K562 (cell line): ENCODE measurements at regions of chr3 and their contacts with region 1.

Region 1: GRCh38 chr3:87298111-87298718 is 21.8 kb upstream of the POU1F1 start:
- DNase-seq: peak; percentile 16 to 29 (median 20)
- ATAC-seq: peak; percentile 77
- H3K4me3 ChIP-seq: no peak overlapping the region
- H3K27ac ChIP-seq: no peak overlapping the region
- H3K4me1 ChIP-seq: no peaks in the 10 kb centered on the region
- H3K27me3 ChIP-seq: no peaks in the 10 kb centered on the region
- CTCF ChIP-seq: peak; percentile 33 to 64 (median 34); a peak in 4 of 6 replicates
- EP300 ChIP-seq: no peak
- POLR2A ChIP-seq: no peak
- RAD21 ChIP-seq: peak; percentile 68 to 70

Region 2: GRCh38 chr3:86618706-86619105 is 679.5 kb before region 1 on chr3:
- CTCF ChIA-PET with region 1: no interaction called
- POLR2A ChIA-PET with region 1: no interaction called
- in situ Hi-C with region 1: no loop called
- intact Hi-C with region 1: no loop called
- DNase-seq: no peak
- ATAC-seq: no peak
- H3K4me3 ChIP-seq: no peak overlapping the region
- H3K27ac ChIP-seq: no peak overlapping the region
- H3K4me1 ChIP-seq: no peaks in the 10 kb centered on the region
- H3K27me3 ChIP-seq: no peaks in the 10 kb centered on the region
- CTCF ChIP-seq: no peak
- EP300 ChIP-seq: no peak
- POLR2A ChIP-seq: no peak
- RAD21 ChIP-seq: no peak

Region 3: GRCh38 chr3:87350364-87351199 is 52.4 kb after region 1 on chr3:
- CTCF ChIA-PET with region 1: no interaction called
- POLR2A ChIA-PET with region 1: no interaction called
- in situ Hi-C with region 1: no loop called
- intact Hi-C with region 1: loop called (anchors 10 kb)
- DNase-seq: peak; percentile 40 to 48 (median 43)
- ATAC-seq: peak; percentile 92
- H3K4me3 ChIP-seq: no peak overlapping the region
- H3K27ac ChIP-seq: no peak overlapping the region
- H3K4me1 ChIP-seq: no peaks in the 10 kb centered on the region; a peak in 1 of 5 replicates
- H3K27me3 ChIP-seq: no peaks in the 10 kb centered on the region
- CTCF ChIP-seq: peak; percentile 53 to 73 (median 55)
- EP300 ChIP-seq: no peak
- POLR2A ChIP-seq: no peak
- RAD21 ChIP-seq: peak; percentile 66 to 74

Region 4: GRCh38 chr3:87410110-87410509 is 111.9 kb after region 1 on chr3:
- CTCF ChIA-PET with region 1: no interaction called
- POLR2A ChIA-PET with region 1: no interaction called
- in situ Hi-C with region 1: no loop called
- intact Hi-C with region 1: no loop called
- DNase-seq: no peak
- ATAC-seq: no peak
- H3K4me3 ChIP-seq: no peak overlapping the region
- H3K27ac ChIP-seq: no peak overlapping the region
- H3K4me1 ChIP-seq: no peaks in the 10 kb centered on the region
- H3K27me3 ChIP-seq: no peaks in the 10 kb centered on the region
- CTCF ChIP-seq: no peak
- EP300 ChIP-seq: no peak
- POLR2A ChIP-seq: no peak
- RAD21 ChIP-seq: no peak

Region 5: DNA sequence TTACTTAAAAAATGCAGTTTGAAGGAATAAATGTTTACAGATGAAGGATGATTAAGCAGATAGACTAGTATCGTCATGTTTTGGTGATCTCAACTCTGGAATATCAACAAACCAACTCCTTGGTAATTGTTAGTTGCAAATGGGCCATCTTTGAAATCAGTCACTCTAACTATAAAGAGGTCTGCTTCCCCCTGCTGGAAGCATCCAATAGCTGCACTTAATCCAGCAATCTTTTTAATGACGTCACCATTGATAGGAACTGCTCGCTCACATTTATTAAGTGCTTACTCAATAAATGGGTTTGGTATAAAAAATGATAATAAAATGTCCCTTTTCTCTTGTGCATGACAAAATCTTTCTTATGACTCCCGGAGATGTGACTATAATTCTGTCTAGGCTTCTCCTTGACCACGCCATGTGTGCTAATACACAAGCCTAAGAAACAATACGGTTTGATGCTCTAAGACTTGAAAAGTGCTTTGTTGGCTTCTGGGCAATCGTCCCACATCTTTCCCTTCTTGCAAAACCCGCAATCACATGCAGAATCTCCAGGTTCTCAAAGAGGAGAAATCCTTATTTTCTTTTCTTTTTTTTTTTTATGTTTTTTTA is 205.8 kb after region 1 on chr3:
- CTCF ChIA-PET with region 1: interaction called, 4 read pairs
- POLR2A ChIA-PET with region 1: no interaction called
- in situ Hi-C with region 1: no loop called
- intact Hi-C with region 1: loop called (anchors 5 kb)
- DNase-seq: peak; percentile 32 to 54 (median 43)
- ATAC-seq: peak; percentile 61; the same call in 2 of the 3 replicates
- H3K4me3 ChIP-seq: no peak overlapping the region
- H3K27ac ChIP-seq: no peak overlapping the region
- H3K4me1 ChIP-seq: no peaks in the 10 kb centered on the region
- H3K27me3 ChIP-seq: no peaks in the 10 kb centered on the region
- CTCF ChIP-seq: peak; percentile 38 to 66 (median 46); a peak in 5 of 6 replicates
- EP300 ChIP-seq: no peak
- POLR2A ChIP-seq: no peak
- RAD21 ChIP-seq: peak in 1 of 2 experiments; percentile 53; a peak in 2 of 4 replicates

Region 6: DNA sequence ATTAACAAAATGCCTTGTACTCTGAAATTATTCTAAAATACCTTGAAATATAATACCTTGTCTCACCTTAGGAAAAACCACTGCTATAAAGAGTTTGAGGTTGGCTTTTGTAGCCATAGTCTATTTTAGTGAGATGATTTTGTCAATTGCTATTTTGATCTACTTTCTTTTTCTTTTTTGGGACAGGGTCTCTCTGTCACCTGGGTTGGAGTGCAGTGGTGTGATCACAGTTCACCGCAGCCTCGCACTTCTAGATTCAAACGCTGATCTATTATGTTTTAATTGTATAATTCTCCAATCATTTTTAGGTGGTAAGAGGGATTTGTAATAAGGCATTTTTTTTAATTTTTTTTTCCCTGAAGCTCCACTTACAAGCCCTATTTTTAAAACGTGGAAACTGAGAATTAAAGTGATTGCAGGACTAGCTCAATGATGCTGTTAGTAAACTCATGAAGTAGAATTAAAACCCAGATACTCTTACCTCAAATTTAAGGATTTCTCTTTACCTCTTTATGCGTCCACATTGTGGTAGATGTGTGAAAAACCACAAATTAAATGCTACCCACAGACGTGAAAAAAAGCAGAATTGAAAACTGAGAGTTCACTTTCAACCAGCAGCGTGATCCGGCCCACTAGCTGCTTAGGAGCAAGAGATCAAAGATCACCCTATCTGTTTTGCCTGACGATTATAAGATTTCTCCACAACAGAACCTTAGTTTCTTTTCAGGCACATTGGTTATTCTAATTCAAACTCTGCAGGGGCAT is 376.4 kb after region 1 on chr3:
- CTCF ChIA-PET with region 1: no interaction called
- POLR2A ChIA-PET with region 1: no interaction called
- in situ Hi-C with region 1: no loop called
- intact Hi-C with region 1: no loop called
- DNase-seq: no peak
- ATAC-seq: no peak
- H3K4me3 ChIP-seq: no peak overlapping the region
- H3K27ac ChIP-seq: no peak overlapping the region
- H3K4me1 ChIP-seq: no peaks in the 10 kb centered on the region
- H3K27me3 ChIP-seq: no peaks in the 10 kb centered on the region
- CTCF ChIP-seq: no peak
- EP300 ChIP-seq: no peak
- POLR2A ChIP-seq: no peak
- RAD21 ChIP-seq: no peak

Region 7: DNA sequence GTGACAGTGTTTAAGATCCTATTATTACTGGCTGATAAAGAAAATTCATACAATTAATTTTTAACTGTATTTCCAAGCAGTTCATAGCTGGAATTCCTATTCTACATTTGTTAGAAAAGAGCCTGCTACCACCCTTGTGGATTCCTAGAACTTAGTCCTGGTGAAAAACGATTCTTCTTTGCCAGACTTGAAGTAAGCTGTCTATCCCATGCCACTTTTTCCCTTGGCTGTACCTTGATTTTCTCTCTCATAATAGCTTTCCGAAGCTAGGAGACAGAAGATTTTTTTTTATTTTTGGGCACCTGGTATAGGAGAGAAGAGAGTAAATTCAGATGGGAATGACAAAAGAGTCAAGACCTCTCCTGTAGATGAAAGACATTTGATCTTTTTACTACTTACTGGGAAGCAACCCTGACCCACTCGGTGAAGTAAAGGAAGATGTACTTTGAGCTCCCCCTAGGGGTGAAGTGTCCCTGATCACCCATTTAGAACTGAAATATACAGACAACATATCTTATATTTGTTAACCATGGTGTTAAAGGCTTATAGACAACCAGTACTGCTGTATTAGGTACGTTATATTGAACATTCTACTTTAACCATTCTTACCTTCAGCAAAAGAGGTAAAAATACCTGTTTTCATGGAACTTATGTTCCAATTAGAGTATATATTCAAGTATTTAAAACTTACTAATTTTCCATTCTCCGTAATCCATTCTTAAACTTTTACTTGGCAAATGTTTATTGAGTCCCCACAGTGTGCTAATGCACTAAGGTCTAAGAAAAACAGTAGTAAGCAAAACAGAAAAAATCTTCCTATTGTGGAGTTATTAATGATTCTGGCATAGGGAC is 815.3 kb after region 1 on chr3:
- CTCF ChIA-PET with region 1: no interaction called
- POLR2A ChIA-PET with region 1: no interaction called
- in situ Hi-C with region 1: no loop called
- intact Hi-C with region 1: loop called (anchors 10 kb)
- DNase-seq: peak; percentile 25 to 79 (median 47)
- ATAC-seq: peak; percentile 97
- H3K4me3 ChIP-seq: no peak overlapping the region
- H3K27ac ChIP-seq: no peak overlapping the region
- H3K4me1 ChIP-seq: no peaks in the 10 kb centered on the region; a peak in 1 of 5 replicates
- H3K27me3 ChIP-seq: no peaks in the 10 kb centered on the region
- CTCF ChIP-seq: peak; percentile 44 to 63 (median 52)
- EP300 ChIP-seq: no peak
- POLR2A ChIP-seq: no peak
- RAD21 ChIP-seq: peak; percentile 43 to 68

Region 8: DNA sequence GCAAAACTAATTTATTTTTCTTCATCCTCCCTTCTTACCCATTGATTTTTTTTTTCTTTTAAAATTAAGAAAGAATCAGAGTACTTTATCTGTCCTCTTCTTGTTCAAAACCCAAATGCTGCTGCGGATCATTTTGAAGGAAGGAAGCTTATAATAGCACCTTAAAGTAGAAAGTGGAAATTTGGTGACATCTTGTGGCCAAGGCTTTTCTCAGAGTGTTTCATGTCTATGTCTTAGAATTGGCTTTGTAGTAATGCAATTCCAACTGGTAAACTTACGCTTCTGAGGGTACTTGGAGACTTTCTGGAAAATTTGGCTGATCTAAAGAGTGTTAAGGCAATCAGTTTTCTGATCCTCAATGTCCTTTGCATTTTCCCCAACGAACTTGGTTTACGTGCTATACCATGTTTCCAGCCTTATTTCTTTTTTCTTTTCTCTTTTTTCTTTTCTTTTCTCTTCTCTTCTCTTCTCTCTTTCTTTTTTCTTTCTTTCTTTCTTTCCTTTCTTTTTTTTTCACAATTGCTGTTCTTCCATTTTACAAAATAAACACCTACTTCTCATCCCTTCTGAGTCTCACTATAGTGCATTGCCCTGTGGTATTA is 882.3 kb after region 1 on chr3:
- CTCF ChIA-PET with region 1: no interaction called
- POLR2A ChIA-PET with region 1: no interaction called
- in situ Hi-C with region 1: no loop called
- intact Hi-C with region 1: loop called (anchors 1 kb)
- DNase-seq: peak in 2 of 4 experiments; percentile 16 to 60
- ATAC-seq: peak; percentile 86
- H3K4me3 ChIP-seq: no peak overlapping the region
- H3K27ac ChIP-seq: no peak overlapping the region
- H3K4me1 ChIP-seq: no peaks in the 10 kb centered on the region
- H3K27me3 ChIP-seq: no peaks in the 10 kb centered on the region
- CTCF ChIP-seq: peak; percentile 30 to 50 (median 45); a peak in 5 of 6 replicates
- EP300 ChIP-seq: no peak
- POLR2A ChIP-seq: no peak
- RAD21 ChIP-seq: peak; percentile 54 to 76